ENCODE measurements at regions of chr6 and their contacts with region 1.

Region 1: DNA sequence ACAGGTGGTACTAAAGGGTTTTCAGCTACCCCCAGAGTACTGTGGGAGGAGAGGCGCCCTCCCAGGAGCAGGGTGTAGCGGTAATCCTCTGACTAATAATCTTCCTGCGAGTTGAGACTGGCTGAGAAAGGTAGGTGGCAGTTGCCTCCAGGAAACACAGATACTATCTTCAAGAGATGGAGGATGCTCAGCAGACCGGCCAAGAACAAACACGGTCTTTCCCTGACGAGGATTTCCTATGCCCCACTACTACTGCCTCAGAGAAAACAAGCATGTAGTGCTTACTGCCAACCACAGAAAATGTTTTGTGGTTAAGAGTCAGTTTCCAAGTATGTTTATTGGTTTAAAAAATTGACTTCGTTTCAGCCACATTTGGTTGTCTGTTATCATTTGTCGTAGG is 26.8 kb downstream of the C6orf89 start:
- DNase-seq: peak; percentile 72
- H3K4me3 Mint-ChIP-seq: peak overlapping the region; percentile 79
- H3K27ac Mint-ChIP-seq: peak overlapping the region; percentile 94
- H3K4me1 Mint-ChIP-seq: peaks cover 57% of the 10 kb centered on the region
- H3K27me3 Mint-ChIP-seq: no peaks in the 10 kb centered on the region

Region 2: DNA sequence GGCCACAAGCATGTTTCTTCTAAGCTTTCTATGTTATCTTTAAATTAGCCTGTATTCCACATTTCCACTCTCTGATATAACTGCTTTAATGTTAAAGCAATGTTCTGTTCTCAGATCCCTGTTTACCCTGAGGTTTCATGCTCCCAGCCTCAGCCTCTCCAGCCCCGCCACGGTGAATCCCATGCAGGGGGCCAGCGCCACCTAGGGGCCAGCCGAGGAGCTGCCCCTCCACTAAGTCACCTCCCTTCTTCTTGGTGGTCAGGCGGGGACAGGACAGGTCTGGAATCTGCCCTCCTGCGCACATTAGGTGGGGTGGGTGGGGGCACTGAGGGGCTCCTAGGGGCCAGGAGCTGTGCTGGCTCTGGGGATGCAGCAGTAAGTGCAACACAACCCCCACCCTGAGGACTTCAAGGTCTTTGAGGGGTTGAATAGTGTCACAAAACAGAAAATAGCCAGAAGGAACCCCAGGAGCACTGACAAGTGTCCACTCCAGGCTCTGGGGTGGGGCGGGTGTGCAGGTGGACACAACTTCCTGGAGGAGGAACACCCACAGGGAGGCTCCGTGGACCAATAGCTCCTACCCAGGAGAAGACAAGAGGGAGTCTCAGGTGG is 153.3 kb before region 1 on chr6:
- intact Hi-C with region 1: loop called (anchors 1 kb)
- DNase-seq: peak; percentile 76
- H3K4me3 Mint-ChIP-seq: no peak overlapping the region
- H3K27ac Mint-ChIP-seq: peak overlapping the region; percentile 61
- H3K4me1 Mint-ChIP-seq: peaks cover 49% of the 10 kb centered on the region
- H3K27me3 Mint-ChIP-seq: no peaks in the 10 kb centered on the region

Region 3: GRCh38 chr6:36924131-36924530 is 11.5 kb after region 1 on chr6:
- intact Hi-C with region 1: loop called (anchors 1 kb)
- DNase-seq: no peak
- H3K4me3 Mint-ChIP-seq: no peak overlapping the region
- H3K27ac Mint-ChIP-seq: peak overlapping the region; percentile 50
- H3K4me1 Mint-ChIP-seq: peaks cover 46% of the 10 kb centered on the region
- H3K27me3 Mint-ChIP-seq: no peaks in the 10 kb centered on the region

Region 4: GRCh38 chr6:37018198-37019064 is 105.8 kb after region 1 on chr6:
- intact Hi-C with region 1: loop called (anchors 1 kb)
- DNase-seq: peak; percentile 84
- H3K4me3 Mint-ChIP-seq: no peak overlapping the region
- H3K27ac Mint-ChIP-seq: peak overlapping the region; percentile 56
- H3K4me1 Mint-ChIP-seq: peaks cover 58% of the 10 kb centered on the region
- H3K27me3 Mint-ChIP-seq: no peaks in the 10 kb centered on the region

Region 5: DNA sequence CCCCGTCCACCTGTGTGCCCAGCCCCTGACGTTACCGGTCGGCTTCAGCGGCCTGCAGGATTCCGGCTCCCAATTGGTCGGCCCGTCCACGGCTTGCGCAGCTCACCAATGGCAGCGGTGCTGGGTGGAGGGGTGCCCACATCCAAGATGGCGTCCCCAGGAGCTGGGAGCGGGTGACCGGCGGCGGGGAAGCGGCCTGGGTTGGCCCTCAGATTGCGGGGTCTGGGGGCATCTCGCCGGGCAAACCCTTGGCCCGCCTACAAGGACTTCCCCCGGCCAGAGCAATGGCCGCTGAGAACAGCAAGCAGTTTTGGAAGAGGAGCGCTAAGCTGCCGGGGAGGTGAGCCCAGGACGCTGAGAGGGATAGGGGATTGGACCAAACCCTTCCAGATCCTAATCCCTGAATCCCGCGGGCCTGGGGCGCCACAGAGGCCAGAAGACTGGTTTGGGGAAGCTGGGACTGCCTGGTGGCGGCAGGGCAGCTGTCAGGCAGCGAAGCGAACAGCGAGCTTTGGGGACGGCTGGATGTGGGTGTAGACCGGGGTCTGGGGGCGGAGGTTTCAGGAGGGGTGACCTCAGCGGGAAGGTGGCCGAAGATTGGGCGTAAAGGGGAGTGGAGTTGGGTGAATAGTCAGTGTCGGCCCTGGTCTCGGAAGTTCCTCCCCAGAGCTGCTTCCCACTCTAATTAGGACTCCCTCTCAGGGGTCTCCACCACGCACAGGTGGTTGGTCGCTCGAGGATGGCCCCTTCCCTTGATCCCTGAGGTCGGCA is 345.2 kb after region 1 on chr6 and contains the starts of genes TBC1D22B and TMEM217:
- intact Hi-C with region 1: loop called (anchors 1 kb)
- DNase-seq: peak; percentile 95
- H3K4me3 Mint-ChIP-seq: peak within 1 kb of the TSS; percentile 97
- H3K27ac Mint-ChIP-seq: peak within 1 kb of the TSS; percentile 100
- H3K4me1 Mint-ChIP-seq: peaks cover 78% of the 10 kb centered on the region
- H3K27me3 Mint-ChIP-seq: no peaks in the 10 kb centered on the region
- total RNA-seq, gene TBC1D22B: 20.8 and 21.2 TPM in 2 replicates
- total RNA-seq, gene TMEM217: 7.7 and 9.9 TPM in 2 replicates

Region 6: GRCh38 chr6:37454420-37455140 is 542.0 kb after region 1 on chr6:
- intact Hi-C with region 1: no loop called
- DNase-seq: no peak
- H3K4me3 Mint-ChIP-seq: no peak overlapping the region
- H3K27ac Mint-ChIP-seq: peak overlapping the region; percentile 78
- H3K4me1 Mint-ChIP-seq: peaks cover 27% of the 10 kb centered on the region
- H3K27me3 Mint-ChIP-seq: no peaks in the 10 kb centered on the region